CD14-positive monocyte (primary cell): ENCODE measurements at regions of chr19 and their contacts with region 1.

Region 1: DNA sequence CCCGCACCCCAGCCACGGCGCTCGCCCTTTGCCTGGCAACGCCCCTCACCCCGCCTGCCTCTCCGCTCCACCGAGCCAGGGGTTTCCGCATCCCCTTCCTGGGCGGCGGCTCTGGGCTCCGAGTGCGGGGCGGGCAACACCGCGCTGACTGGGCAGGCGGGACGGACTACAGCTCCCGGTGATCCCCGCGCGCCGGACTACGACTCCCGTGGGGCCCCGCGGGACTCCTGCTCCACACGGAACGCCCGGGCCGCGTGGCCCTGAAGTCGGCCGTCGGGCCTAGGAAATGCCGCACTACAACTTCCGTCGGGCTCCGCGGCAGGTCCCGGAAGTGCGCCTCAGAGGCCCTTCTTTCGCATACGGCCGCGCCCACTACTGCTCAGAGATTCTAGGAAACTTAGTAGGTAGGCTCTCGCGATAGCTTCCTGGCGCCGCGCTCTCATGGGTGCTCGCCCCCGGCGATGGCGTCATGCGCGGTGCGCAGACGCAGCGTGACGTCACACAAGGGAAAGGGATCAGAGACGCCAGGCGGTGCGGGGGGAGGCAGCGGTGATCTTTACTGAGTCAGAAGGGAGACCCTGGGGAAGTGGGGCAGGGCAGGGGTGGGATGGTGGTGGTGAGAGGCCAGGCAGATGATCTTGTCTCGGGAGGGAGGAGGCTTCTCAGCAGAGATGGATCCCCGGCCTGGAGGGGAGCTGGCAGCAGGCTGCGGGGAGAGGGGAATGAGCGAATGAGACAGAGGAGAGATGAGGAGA is at the start of gene JOSD2:
- DNase-seq: peak; percentile 99 to 100 (median 100)
- H3K4me3 ChIP-seq: peak within 1 kb of the TSS; percentile 77 to 91 (median 83)
- H3K4me3 Mint-ChIP-seq: peak within 1 kb of the TSS; percentile 90 to 95
- H3K27ac ChIP-seq: peak within 1 kb of the TSS; percentile 72 to 91
- H3K27ac Mint-ChIP-seq: peak within 1 kb of the TSS; percentile 92 to 97 (median 96)
- H3K4me1 ChIP-seq: peaks cover 11 to 16% of the 10 kb centered on the region in 2 donors
- H3K4me1 Mint-ChIP-seq: peaks cover 15% of the 10 kb centered on the region
- H3K27me3 ChIP-seq: peaks cover 0 to 6% of the 10 kb centered on the region in 2 donors
- H3K27me3 Mint-ChIP-seq: peaks cover 13 to 30% (median 21%) of the 10 kb centered on the region in 3 donors
- CTCF ChIP-seq: no peak
- polyA plus RNA-seq, gene JOSD2: 33.0 to 43.0 (median 37.2) TPM

Region 2: GRCh38 chr19:50376166-50377050 is 134.8 kb before region 1 on chr19 and contains the start of gene NR1H2:
- intact Hi-C with region 1: loop called (anchors 2 to 5 kb)
- DNase-seq: peak; percentile 97 to 99 (median 98)
- H3K4me3 ChIP-seq: peak within 1 kb of the TSS; percentile 88 to 97 (median 93)
- H3K4me3 Mint-ChIP-seq: peak within 1 kb of the TSS; percentile 89 to 98
- H3K27ac ChIP-seq: peak within 1 kb of the TSS; percentile 97 to 99
- H3K27ac Mint-ChIP-seq: peak within 1 kb of the TSS; percentile 95 to 100 (median 100)
- H3K4me1 ChIP-seq: peaks cover 23 to 26% of the 10 kb centered on the region in 2 donors
- H3K4me1 Mint-ChIP-seq: peaks cover 21% of the 10 kb centered on the region
- H3K27me3 ChIP-seq: no peaks in the 10 kb centered on the region
- H3K27me3 Mint-ChIP-seq: peaks cover 1 to 2% (median 2%) of the 10 kb centered on the region in 3 donors
- CTCF ChIP-seq: no peak
- polyA plus RNA-seq, gene NR1H2: 77.1 to 111 (median 78.9) TPM

Region 3: DNA sequence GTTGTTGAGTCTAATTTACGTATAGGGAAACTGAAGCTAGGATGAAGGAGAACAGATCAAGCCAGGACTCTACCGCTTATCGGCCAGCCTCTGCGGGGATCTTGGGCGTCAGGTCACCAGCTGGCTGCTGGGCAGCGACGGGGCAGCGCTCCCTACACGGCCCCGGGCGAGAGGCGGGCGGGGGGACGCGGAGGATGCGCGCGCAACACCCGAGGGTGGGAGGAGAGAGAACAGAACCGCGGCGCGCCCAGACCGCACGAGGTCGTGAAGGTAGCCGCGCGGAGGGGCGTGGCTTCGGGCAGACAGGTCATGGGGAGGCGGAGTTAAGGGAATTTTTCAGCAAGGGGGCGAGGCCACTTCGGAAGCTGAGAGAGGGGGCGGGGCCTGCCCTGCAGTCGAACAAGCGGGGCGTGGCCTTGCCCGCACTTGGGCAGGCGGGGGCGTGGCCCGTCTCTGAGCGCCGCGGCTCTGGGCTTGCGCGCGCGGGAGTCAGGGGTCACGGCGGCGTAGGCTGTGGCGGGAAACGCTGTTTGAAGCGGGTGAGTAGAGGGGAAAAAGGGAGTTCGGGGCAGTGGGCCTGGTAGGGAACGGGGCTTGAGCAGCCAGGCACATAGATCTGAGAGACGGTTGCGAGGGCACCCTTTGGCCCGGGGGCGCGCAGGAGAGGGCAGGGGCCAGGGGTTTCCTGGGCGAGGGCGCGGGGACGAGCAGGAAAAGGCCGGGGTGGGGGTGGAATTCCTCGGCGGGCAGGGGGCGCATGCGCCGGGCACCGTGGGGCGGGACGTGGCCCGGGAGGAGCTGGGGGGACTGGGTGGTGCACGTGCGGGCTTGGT is 127.2 kb before region 1 on chr19 and contains the start of gene POLD1:
- intact Hi-C with region 1: loop called in 1 of 2 experiments (anchors 5 kb)
- DNase-seq: peak; percentile 98 to 99 (median 98)
- H3K4me3 ChIP-seq: peak within 1 kb of the TSS; percentile 45 to 86 (median 48)
- H3K4me3 Mint-ChIP-seq: peak within 1 kb of the TSS; percentile 82 to 95
- H3K27ac ChIP-seq: peak within 1 kb of the TSS; percentile 61 to 71
- H3K27ac Mint-ChIP-seq: peak within 1 kb of the TSS; percentile 91 to 98 (median 96)
- H3K4me1 ChIP-seq: peaks cover 48 to 60% of the 10 kb centered on the region in 2 donors
- H3K4me1 Mint-ChIP-seq: peaks cover 52% of the 10 kb centered on the region
- H3K27me3 ChIP-seq: no peaks in the 10 kb centered on the region
- H3K27me3 Mint-ChIP-seq: peaks cover 0 to 5% (median 3%) of the 10 kb centered on the region in 3 donors
- CTCF ChIP-seq: no peak
- polyA plus RNA-seq, gene POLD1: 9.3 to 22.4 (median 15.6) TPM

Region 4: GRCh38 chr19:50476224-50476942 is 34.9 kb before region 1 on chr19 and contains the starts of genes EMC10 and GARIN5A:
- intact Hi-C with region 1: loop called (anchors 1 to 2 kb)
- DNase-seq: peak; percentile 85 to 93 (median 92)
- H3K4me3 ChIP-seq: peak within 1 kb of the TSS; percentile 64 to 98 (median 97)
- H3K4me3 Mint-ChIP-seq: peak within 1 kb of the TSS; percentile 98 to 99
- H3K27ac ChIP-seq: peak within 1 kb of the TSS; percentile 70 to 86
- H3K27ac Mint-ChIP-seq: peak within 1 kb of the TSS; percentile 90 to 96 (median 93)
- H3K4me1 ChIP-seq: peaks cover 11 to 12% of the 10 kb centered on the region in 2 donors
- H3K4me1 Mint-ChIP-seq: peaks cover 14% of the 10 kb centered on the region
- H3K27me3 ChIP-seq: no peaks in the 10 kb centered on the region
- H3K27me3 Mint-ChIP-seq: peaks cover 0 to 6% (median 6%) of the 10 kb centered on the region in 3 donors
- CTCF ChIP-seq: no peak
- polyA plus RNA-seq, gene EMC10: 8.5 to 50.4 (median 9.3) TPM
- polyA plus RNA-seq, gene GARIN5A: 0.41 TPM in 1 of 3 donors, not detected in the others

Region 5: GRCh38 chr19:50804420-50805272 is 293.4 kb after region 1 on chr19:
- intact Hi-C with region 1: loop called in 1 of 2 experiments (anchors 5 kb)
- DNase-seq: peak; percentile 93 to 96 (median 96)
- H3K4me3 ChIP-seq: peak overlapping the region; percentile 69 to 99 (median 69)
- H3K4me3 Mint-ChIP-seq: peak overlapping the region; percentile 98 to 100
- H3K27ac ChIP-seq: peak overlapping the region; percentile 90 to 98
- H3K27ac Mint-ChIP-seq: peak overlapping the region; percentile 99 to 100 (median 100)
- H3K4me1 ChIP-seq: peaks cover 18 to 20% of the 10 kb centered on the region in 2 donors
- H3K4me1 Mint-ChIP-seq: peaks cover 22% of the 10 kb centered on the region
- H3K27me3 ChIP-seq: no peaks in the 10 kb centered on the region
- H3K27me3 Mint-ChIP-seq: peaks cover 4 to 5% (median 5%) of the 10 kb centered on the region in 3 donors
- CTCF ChIP-seq: no peak